ENCODE measurements at regions of chr15 and their contacts with region 1.

Region 1: GRCh38 chr15:73273181-73274002 is 95.4 kb downstream of the HCN4 start:
- DNase-seq: peak; percentile 60
- H3K4me3 Mint-ChIP-seq: no peak overlapping the region
- H3K27ac Mint-ChIP-seq: no peak overlapping the region
- H3K4me1 Mint-ChIP-seq: peaks cover 4% of the 10 kb centered on the region
- H3K27me3 Mint-ChIP-seq: no peaks in the 10 kb centered on the region

Region 2: GRCh38 chr15:73258271-73259108 is 14.9 kb before region 1 on chr15:
- CTCF ChIA-PET with region 1: interaction called, 30 read pairs
- POLR2A ChIA-PET with region 1: no interaction called
- intact Hi-C with region 1: no loop called
- DNase-seq: peak; percentile 40
- H3K4me3 Mint-ChIP-seq: no peak overlapping the region
- H3K27ac Mint-ChIP-seq: no peak overlapping the region
- H3K4me1 Mint-ChIP-seq: peaks cover 8% of the 10 kb centered on the region
- H3K27me3 Mint-ChIP-seq: no peaks in the 10 kb centered on the region

Region 3: DNA sequence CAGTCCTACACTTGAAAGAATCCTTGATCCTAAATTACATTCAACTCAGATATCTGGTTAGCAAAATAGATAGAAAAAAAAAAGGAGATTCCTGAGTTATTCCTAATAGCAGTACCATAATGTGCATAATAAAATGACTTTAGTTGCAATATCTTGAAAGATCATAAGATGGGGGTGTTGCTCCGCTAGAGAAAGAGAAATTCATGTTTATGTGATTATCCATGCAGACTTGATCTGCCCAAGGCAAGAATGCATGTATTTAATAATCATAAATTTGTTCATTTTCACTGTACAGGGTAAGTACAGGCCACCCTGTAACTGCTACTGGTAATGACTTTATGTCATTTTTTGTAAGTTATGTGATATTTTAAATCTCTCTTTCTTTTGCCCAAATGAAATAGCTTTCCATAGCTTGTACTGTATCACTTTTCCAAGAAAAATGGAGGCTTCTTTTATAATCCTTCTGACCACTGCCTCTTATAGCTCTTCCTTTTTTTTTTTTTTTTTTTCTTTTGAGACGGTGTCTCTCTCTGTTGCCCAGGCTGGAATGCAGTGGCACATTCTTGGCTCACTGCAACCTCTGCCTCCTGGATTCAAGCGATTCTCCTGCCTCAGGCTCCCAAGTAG is 10.8 kb after region 1 on chr15:
- CTCF ChIA-PET with region 1: interaction called, 14 read pairs
- POLR2A ChIA-PET with region 1: no interaction called
- intact Hi-C with region 1: no loop called
- DNase-seq: no peak
- H3K4me3 Mint-ChIP-seq: no peak overlapping the region
- H3K27ac Mint-ChIP-seq: no peak overlapping the region
- H3K4me1 Mint-ChIP-seq: peaks cover 13% of the 10 kb centered on the region
- H3K27me3 Mint-ChIP-seq: no peaks in the 10 kb centered on the region

Region 4: GRCh38 chr15:73388256-73388781 is 114.9 kb after region 1 on chr15:
- CTCF ChIA-PET with region 1: no interaction called
- POLR2A ChIA-PET with region 1: no interaction called
- intact Hi-C with region 1: no loop called
- DNase-seq: no peak
- H3K4me3 Mint-ChIP-seq: no peak overlapping the region
- H3K27ac Mint-ChIP-seq: no peak overlapping the region
- H3K4me1 Mint-ChIP-seq: no peaks in the 10 kb centered on the region
- H3K27me3 Mint-ChIP-seq: peaks cover 15% of the 10 kb centered on the region

Measured in activated CD4-positive, alpha-beta memory T cell treated with anti-CD3 and anti-CD28 coated beads for 36 hours (primary cell).